IMR-90 (cell line): ENCODE measurements at regions of chr13 and their contacts with region 1.

Region 1: GRCh38 chr13:76473552-76474134 is 412.6 kb downstream of the KCTD12 start:
- DNase-seq: peak; percentile 80
- ATAC-seq: peak; percentile 97
- H3K4me3 ChIP-seq: no peak overlapping the region
- H3K27ac ChIP-seq: no peak overlapping the region
- H3K4me1 ChIP-seq: peaks cover 1% of the 10 kb centered on the region; the same call in 1 of the 2 replicates
- H3K27me3 ChIP-seq: peaks cover 18% of the 10 kb centered on the region
- CTCF ChIP-seq: peak; percentile 87
- POLR2A ChIP-seq: 0 out of 2 replicates have a peak, but pooled peaks have one; percentile 44
- RAD21 ChIP-seq: peak; percentile 95

Region 2: DNA sequence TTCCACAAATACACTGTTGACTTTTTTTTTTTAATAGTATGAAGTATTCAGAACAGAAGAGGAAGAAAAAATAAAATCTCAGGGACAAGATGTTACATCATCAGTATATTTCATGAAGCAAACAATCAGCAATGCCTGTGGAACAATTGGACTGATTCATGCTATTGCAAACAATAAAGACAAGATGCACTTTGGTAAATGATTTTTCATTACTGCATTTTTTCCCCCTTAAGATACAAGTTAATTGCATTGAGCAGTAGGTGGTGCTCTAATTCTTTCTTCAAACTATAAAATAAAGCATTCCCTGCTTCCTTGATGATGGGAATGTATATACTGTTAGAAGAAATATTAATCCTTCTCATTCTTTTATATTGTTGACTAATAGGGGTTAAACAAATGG is 907.0 kb before region 1 on chr13:
- CTCF ChIA-PET with region 1: no interaction called
- POLR2A ChIA-PET with region 1: no interaction called
- dilution Hi-C with region 1: no loop called
- in situ Hi-C with region 1: loop called (anchors 25 kb)
- intact Hi-C with region 1: loop called (anchors 10 kb)
- DNase-seq: peak; percentile 71
- ATAC-seq: peak; percentile 79
- H3K4me3 ChIP-seq: no peak overlapping the region
- H3K27ac ChIP-seq: no peak overlapping the region
- H3K4me1 ChIP-seq: peaks cover 3% of the 10 kb centered on the region
- H3K27me3 ChIP-seq: no peaks in the 10 kb centered on the region
- CTCF ChIP-seq: peak; percentile 62
- POLR2A ChIP-seq: no peak
- RAD21 ChIP-seq: peak; percentile 71

Region 3: DNA sequence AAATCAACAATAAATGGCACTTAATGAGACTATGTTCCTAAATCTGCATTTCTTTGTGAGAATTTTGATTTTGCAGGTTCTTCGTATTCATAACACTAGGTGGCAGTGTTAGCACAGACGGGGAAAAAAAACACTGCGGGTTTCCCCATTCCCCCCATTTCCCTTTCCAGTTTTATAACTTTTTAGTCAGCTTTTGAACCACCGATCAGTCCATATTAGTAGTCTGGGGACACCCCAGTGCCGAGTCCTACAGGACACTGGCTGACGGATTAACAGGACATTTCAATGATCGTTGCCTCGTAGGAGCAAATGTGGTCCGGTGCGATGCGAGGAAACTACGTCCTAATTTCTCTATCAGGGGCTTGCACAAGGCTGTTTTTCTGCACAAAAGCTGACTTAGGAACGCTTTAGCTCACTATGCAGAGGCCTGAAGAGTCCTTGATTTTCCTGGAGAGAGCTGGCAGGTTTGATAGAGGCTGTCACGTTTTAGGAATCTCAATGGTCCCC is 603.2 kb before region 1 on chr13:
- CTCF ChIA-PET with region 1: interaction called, 12 read pairs
- POLR2A ChIA-PET with region 1: no interaction called
- dilution Hi-C with region 1: no loop called
- in situ Hi-C with region 1: loop called (anchors 5 kb)
- intact Hi-C with region 1: loop called (anchors 1 kb)
- DNase-seq: peak; percentile 20
- ATAC-seq: peak; percentile 5; the same call in 1 of the 2 replicates
- H3K4me3 ChIP-seq: peak overlapping the region; percentile 34; the same call in 1 of the 2 replicates
- H3K27ac ChIP-seq: peak overlapping the region; percentile 4; the same call in 1 of the 2 replicates
- H3K4me1 ChIP-seq: no peaks in the 10 kb centered on the region
- H3K27me3 ChIP-seq: no peaks in the 10 kb centered on the region
- CTCF ChIP-seq: peak; percentile 68
- POLR2A ChIP-seq: peak; percentile 11; the same call in 1 of the 2 replicates
- RAD21 ChIP-seq: peak; percentile 61

Region 4: DNA sequence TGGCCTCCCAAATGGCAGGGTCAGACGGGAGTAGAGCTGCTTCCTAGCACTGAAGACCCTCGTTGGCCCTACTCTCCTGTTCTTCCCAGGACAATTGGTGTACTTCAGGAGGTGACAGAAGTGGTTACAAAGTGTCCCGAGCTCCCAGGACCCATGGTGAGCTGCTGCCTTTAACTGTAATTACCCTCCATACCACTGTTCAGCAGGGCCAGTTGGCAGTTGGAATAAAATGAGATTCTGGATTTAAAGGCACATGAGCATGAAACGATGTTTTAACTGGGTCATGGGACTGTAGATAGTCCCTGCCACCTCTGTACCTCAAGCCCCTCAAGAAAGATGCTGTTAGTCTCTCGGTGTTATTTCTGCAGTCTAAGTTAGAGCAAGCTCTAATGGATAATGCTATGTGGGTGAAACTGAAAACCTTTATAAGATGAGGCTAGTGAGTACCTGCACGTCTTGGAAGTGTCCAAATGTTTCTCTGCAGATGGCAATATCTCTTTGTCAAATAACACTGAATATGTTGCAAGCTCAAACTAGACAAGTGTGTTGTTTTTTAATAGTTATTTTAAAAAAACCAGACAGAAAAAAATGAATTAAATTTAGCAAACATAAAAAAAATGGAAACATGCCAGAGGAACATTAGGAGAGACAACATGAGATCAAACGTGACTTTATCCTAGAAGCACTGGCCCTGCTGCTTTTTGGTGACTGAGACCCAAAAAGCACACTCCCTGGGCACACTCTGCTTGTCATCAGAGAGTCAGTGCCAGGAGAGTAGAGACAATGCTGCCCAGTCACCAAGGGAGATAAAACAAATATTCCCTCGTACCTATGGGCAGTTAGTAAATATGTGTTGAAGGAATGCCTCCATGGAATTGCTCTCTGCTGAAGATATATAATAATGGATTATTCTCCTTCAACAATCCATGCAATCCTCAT is 571.2 kb before region 1 on chr13:
- CTCF ChIA-PET with region 1: no interaction called
- POLR2A ChIA-PET with region 1: no interaction called
- dilution Hi-C with region 1: no loop called
- in situ Hi-C with region 1: no loop called
- intact Hi-C with region 1: no loop called
- DNase-seq: no peak
- ATAC-seq: no peak
- H3K4me3 ChIP-seq: no peak overlapping the region
- H3K27ac ChIP-seq: no peak overlapping the region
- H3K4me1 ChIP-seq: no peaks in the 10 kb centered on the region; the same call in 1 of the 2 replicates
- H3K27me3 ChIP-seq: peaks cover 8% of the 10 kb centered on the region
- CTCF ChIP-seq: no peak
- POLR2A ChIP-seq: no peak
- RAD21 ChIP-seq: no peak

Region 5: GRCh38 chr13:76038920-76039716 is 434.5 kb before region 1 on chr13:
- CTCF ChIA-PET with region 1: no interaction called
- POLR2A ChIA-PET with region 1: no interaction called
- dilution Hi-C with region 1: no loop called
- in situ Hi-C with region 1: no loop called
- intact Hi-C with region 1: loop called (anchors 10 kb)
- DNase-seq: no peak
- ATAC-seq: no peak
- H3K4me3 ChIP-seq: no peak overlapping the region
- H3K27ac ChIP-seq: no peak overlapping the region
- H3K4me1 ChIP-seq: peaks cover 12% of the 10 kb centered on the region
- H3K27me3 ChIP-seq: no peaks in the 10 kb centered on the region
- CTCF ChIP-seq: no peak
- POLR2A ChIP-seq: no peak
- RAD21 ChIP-seq: no peak

Region 6: DNA sequence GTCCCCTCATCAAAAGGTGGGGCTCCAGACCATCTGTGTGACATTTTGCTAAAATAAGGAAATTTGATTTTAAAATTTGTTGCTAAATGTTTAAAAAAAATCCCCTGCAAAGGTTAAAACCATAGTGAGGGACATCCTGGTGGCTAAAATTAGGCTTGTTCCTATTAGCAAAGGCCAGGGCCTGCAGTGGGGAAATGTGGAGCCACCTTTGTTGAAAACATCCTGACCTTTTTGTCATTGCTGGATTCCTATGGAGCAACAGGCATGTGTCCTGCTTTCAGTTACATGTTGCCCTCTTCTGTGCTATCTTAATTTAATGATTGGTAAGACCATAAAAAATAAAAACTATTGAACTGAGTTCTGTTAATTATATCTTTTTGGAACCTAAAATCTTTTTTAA is 111.8 kb before region 1 on chr13:
- CTCF ChIA-PET with region 1: no interaction called
- POLR2A ChIA-PET with region 1: no interaction called
- dilution Hi-C with region 1: no loop called
- in situ Hi-C with region 1: no loop called
- intact Hi-C with region 1: no loop called
- DNase-seq: no peak
- ATAC-seq: no peak
- H3K4me3 ChIP-seq: no peak overlapping the region
- H3K27ac ChIP-seq: no peak overlapping the region
- H3K4me1 ChIP-seq: no peaks in the 10 kb centered on the region
- H3K27me3 ChIP-seq: no peaks in the 10 kb centered on the region; the same call in 1 of the 2 replicates
- CTCF ChIP-seq: no peak
- POLR2A ChIP-seq: no peak
- RAD21 ChIP-seq: no peak

Region 7: GRCh38 chr13:76383676-76384461 is 89.8 kb before region 1 on chr13:
- CTCF ChIA-PET with region 1: no interaction called
- POLR2A ChIA-PET with region 1: no interaction called
- dilution Hi-C with region 1: no loop called
- in situ Hi-C with region 1: no loop called
- intact Hi-C with region 1: loop called (anchors 5 kb)
- DNase-seq: peak; percentile 94
- ATAC-seq: peak; percentile 95
- H3K4me3 ChIP-seq: no peak overlapping the region
- H3K27ac ChIP-seq: peak overlapping the region; percentile 58; the same call in 1 of the 2 replicates
- H3K4me1 ChIP-seq: peaks cover 4% of the 10 kb centered on the region; the same call in 1 of the 2 replicates
- H3K27me3 ChIP-seq: peaks cover 20% of the 10 kb centered on the region
- CTCF ChIP-seq: no peak
- POLR2A ChIP-seq: no peak
- RAD21 ChIP-seq: no peak